GM23248 (cell line): ENCODE measurements at regions of chr7 and their contacts with region 1.

Region 1: DNA sequence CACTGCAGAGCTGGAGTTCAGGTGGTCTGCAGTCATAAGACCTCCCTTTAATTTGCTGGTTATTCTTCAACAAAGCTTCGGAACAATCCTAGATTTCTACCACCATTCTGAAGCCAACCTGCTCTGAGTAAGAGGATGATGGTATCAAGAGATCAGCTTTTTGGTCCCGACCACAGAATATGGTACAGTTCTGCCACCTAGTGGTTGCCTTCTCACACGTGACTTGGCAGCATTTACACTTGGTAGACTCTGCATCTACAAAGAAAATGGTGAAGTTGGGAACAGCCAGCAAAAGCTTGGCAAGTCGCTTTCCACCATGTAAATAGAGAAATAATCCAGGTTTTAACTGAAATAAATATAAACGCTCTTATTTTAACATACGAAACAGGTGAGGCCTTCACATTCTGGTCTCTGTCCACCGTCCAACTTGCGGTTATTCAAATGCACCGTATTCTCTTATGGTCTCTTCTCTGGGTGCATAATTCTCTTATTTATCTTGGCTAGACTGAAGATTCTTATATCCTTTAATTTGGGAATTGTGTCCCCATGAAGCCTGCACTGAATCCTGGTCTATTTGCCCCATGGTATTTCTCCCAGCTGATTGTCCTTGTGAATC is 173.9 kb upstream of the GRM3 start:
- DNase-seq: peak; percentile 82
- H3K4me3 ChIP-seq: no peak overlapping the region
- H3K27ac ChIP-seq: no peak overlapping the region
- H3K4me1 ChIP-seq: no peaks in the 10 kb centered on the region
- H3K27me3 ChIP-seq: no peaks in the 10 kb centered on the region

Region 2: GRCh38 chr7:85452674-85453073 is 1017.1 kb before region 1 on chr7:
- in situ Hi-C with region 1: no loop called
- DNase-seq: no peak
- H3K4me3 ChIP-seq: no peak overlapping the region
- H3K27ac ChIP-seq: no peak overlapping the region
- H3K4me1 ChIP-seq: 0 out of 2 replicates have a peak, but pooled peaks cover 6% of the 10 kb centered on the region
- H3K27me3 ChIP-seq: no peaks in the 10 kb centered on the region

Region 3: GRCh38 chr7:85890244-85890811 is 579.5 kb before region 1 on chr7:
- in situ Hi-C with region 1: loop called (anchors 10 kb)
- DNase-seq: peak; percentile 69
- H3K4me3 ChIP-seq: no peak overlapping the region
- H3K27ac ChIP-seq: no peak overlapping the region
- H3K4me1 ChIP-seq: no peaks in the 10 kb centered on the region
- H3K27me3 ChIP-seq: no peaks in the 10 kb centered on the region